Mammary epithelial cell (primary cell): ENCODE measurements at regions of chr19 and their contacts with region 1.

Region 1: DNA sequence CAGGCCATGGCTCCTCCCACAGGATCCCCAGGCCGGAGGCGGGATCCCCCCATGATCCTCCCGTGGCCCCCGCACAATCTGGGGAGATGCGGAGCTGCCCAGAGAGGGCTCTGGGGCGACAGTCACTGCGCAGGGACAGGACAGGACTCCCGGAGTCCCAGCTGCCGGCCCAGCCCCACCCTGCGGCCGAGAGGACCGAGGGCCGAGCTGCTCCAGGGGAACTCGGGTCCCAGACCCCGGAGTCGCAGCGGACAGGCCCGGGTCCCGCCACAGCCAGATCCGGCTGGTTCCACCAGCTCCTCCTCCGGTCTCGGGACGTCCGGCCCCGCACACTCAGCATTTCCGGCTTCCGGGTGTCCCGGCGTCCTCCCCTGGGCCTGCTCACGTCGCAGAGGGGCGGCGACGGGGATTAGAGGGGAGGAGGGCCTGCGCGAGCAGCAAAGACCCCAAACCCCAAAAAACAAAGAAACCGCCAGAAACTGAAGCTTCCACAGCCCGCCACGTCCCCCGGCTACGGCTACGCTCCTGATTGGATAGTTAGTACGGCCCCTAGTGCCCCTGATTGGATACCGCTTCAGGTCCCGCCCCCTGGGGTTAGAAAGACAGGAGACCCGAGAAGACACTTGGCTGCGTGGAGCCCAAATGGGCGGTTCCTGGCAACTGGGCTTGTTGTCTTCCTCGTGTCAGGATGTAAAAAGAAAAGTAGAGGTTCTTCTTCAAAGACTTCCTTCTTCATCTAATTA is 21.3 kb upstream of the OR10H1 start:
- DNase-seq: peak; percentile 92
- H3K4me3 ChIP-seq: peak overlapping the region; percentile 57 to 61 (median 60)
- H3K27ac ChIP-seq: peak overlapping the region; percentile 99
- H3K4me1 ChIP-seq: peaks cover 47% of the 10 kb centered on the region
- H3K27me3 ChIP-seq: no peaks in the 10 kb centered on the region
- CTCF ChIP-seq: no peak

Region 2: DNA sequence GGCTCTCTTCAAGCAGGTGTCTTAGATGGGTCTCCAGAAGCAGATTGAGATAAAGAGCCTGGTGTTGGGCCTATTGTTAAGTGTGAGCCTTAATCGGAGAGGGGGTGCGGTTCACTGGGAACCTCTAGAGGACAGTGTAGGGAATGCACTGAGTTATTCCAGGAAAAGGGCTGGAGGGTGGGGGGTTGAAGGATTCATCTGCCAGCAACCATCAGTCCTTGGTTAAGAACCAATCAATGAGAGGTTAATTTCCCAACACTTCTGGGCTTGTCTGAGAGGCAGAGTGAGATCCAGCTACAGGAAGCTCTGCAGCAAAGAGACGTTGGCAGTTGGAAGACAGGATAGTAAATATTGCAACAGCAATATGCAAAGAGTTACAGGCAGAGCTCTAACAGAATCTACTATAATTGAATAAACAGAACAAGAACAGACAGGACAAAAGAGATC is 32.4 kb after region 1 on chr19:
- CTCF ChIA-PET with region 1: no interaction called
- dilution Hi-C with region 1: no loop called
- in situ Hi-C with region 1: no loop called
- intact Hi-C with region 1: loop called (anchors 2 kb)
- DNase-seq: peak; percentile 75
- H3K4me3 ChIP-seq: no peak overlapping the region
- H3K27ac ChIP-seq: no peak overlapping the region
- H3K4me1 ChIP-seq: peaks cover 12% of the 10 kb centered on the region
- H3K27me3 ChIP-seq: no peaks in the 10 kb centered on the region
- CTCF ChIP-seq: peak; percentile 80 to 87

Region 3: DNA sequence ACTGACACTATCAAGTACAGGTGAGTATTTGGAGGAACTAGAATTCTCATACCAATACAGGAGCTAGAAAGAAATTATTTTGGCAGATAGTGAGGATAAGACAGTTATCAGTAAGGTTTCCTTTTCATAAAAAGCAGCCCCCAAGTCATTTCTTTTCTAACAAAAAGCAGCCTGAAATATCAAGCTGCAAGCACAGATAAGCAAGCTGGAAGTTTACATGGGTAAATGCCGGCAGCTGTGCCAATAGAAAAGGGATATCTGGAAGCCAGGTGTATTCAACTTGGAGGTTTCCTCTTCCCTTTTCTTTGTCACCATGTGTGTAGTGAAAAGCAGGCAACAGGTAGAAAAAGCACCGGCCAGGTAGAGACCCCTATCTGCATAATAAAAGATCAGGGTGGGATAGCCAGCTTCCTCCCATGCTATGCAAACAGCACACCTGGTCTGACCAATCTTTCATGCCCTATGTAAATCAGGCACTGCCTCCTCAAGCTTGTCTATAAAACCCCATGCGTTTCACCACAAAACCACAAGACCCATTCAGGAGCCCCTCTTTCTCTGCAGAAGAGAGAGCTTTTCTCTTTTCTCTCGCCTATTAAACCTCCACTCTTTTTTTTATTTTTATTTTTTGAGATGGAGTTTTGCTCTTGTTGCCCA is 38.2 kb after region 1 on chr19:
- CTCF ChIA-PET with region 1: no interaction called
- dilution Hi-C with region 1: loop called (anchors 5 kb)
- in situ Hi-C with region 1: no loop called
- intact Hi-C with region 1: no loop called
- DNase-seq: no peak
- H3K4me3 ChIP-seq: no peak overlapping the region
- H3K27ac ChIP-seq: no peak overlapping the region
- H3K4me1 ChIP-seq: peaks cover 7% of the 10 kb centered on the region
- H3K27me3 ChIP-seq: no peaks in the 10 kb centered on the region
- CTCF ChIP-seq: no peak

Region 4: GRCh38 chr19:16062789-16063188 is 226.0 kb after region 1 on chr19:
- CTCF ChIA-PET with region 1: no interaction called
- dilution Hi-C with region 1: no loop called
- in situ Hi-C with region 1: no loop called
- intact Hi-C with region 1: loop called (anchors 10 kb)
- DNase-seq: no peak
- H3K4me3 ChIP-seq: no peak overlapping the region
- H3K27ac ChIP-seq: no peak overlapping the region
- H3K4me1 ChIP-seq: peaks cover 12% of the 10 kb centered on the region
- H3K27me3 ChIP-seq: no peaks in the 10 kb centered on the region
- CTCF ChIP-seq: peak; percentile 87 to 98